ENCODE measurements at regions of chr1 and their contacts with region 1.

Region 1: DNA sequence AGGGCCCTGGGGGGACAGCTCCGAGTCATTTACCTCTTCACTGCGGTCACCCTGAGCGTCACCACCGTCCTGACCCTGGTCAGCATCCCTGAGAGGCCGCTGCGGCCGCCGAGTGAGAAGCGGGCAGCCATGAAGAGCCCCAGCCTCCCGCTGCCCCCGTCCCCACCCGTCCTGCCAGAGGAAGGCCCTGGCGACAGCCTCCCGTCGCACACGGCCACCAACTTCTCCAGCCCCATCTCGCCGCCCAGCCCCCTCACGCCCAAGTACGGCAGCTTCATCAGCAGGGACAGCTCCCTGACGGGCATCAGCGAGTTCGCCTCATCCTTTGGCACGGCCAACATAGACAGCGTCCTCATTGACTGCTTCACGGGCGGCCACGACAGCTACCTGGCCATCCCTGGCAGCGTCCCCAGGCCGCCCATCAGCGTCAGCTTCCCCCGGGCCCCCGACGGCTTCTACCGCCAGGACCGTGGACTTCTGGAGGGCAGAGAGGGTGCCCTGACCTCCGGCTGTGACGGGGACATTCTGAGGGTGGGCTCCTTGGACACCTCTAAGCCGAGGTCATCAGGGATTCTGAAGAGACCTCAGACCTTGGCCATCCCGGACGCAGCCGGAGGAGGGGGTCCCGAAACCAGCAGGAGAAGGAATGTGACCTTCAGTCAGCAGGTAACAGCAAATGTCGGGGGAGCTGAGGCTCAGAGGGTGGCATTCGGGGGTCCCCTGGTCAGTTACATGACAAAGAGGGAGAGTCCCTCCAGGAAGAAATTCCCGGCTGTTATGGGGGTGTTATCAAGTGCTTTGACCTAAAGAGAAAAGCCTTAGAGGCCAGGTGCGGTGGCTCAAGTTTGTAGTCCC is 12.6 kb downstream of the SLC45A1 start:
- DNase-seq: peak; percentile 76

Region 2: GRCh38 chr1:8456308-8456912 is 125.9 kb after region 1 on chr1:
- intact Hi-C with region 1: no loop called
- DNase-seq: no peak

Region 3: GRCh38 chr1:9520411-9520810 is 1189.9 kb after region 1 on chr1:
- intact Hi-C with region 1: loop called in 1 of 2 experiments (anchors 5 kb)
- DNase-seq: no peak

Measured in posterior vena cava (tissue), 2 donors.